Posterior cingulate gyrus (tissue), 11 donors: ENCODE measurements at regions of chr12 and their contacts with region 1.

Region 1: GRCh38 chr12:43776498-43776897 is 17.7 kb downstream of the IRAK4 start:
- DNase-seq: no peak

Region 2: GRCh38 chr12:43882578-43883178 is 106.2 kb after region 1 on chr12:
- intact Hi-C with region 1: loop called (anchors 1 kb)
- DNase-seq: peak in 2 of 10 donors; percentile 6 to 23